ENCODE measurements at regions of chr16 and their contacts with region 1.

Region 1: DNA sequence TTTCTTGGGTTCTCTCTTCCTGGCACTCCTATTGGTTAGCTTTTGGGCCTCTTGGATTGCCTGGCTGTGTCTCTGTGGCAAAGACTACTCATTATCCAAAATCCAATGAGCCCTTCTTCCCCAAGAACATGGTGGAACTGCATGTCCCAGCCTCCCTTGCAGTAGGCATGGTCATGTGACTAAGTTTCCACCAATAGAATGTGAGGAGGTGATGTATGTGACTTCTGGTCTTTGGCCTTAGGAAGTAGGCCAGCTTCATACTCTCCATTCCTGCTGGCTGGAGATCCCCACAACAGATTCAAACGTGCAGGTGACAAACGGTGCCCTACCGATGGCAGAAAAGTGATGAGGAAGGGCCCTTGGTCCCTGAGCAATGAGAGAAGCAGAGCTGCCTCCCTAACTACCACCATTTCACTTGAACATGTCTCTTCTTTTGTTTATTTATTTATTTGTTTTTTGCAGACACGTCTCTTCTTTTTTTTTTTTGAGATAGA is 17.3 kb upstream of the SPN start:
- DNase-seq: peak in 1 of 9 experiments; percentile 42
- ATAC-seq: no peak
- H3K4me3 ChIP-seq: no peak overlapping the region
- H3K4me3 Mint-ChIP-seq: no peak overlapping the region
- H3K27ac ChIP-seq: no peak overlapping the region
- H3K27ac Mint-ChIP-seq: peak overlapping the region; percentile 67
- H3K4me1 ChIP-seq: peaks cover 17% of the 10 kb centered on the region
- H3K4me1 Mint-ChIP-seq: peaks cover 23% of the 10 kb centered on the region
- H3K27me3 ChIP-seq: no peaks in the 10 kb centered on the region
- H3K27me3 Mint-ChIP-seq: no peaks in the 10 kb centered on the region
- CTCF ChIP-seq: no peak

Region 2: GRCh38 chr16:27929818-27930217 is 1715.9 kb before region 1 on chr16:
- CTCF ChIA-PET with region 1: no interaction called
- POLR2A ChIA-PET with region 1: no interaction called
- intact Hi-C with region 1: no loop called
- DNase-seq: no peak
- ATAC-seq: no peak
- H3K4me3 ChIP-seq: no peak overlapping the region
- H3K4me3 Mint-ChIP-seq: no peak overlapping the region
- H3K27ac ChIP-seq: no peak overlapping the region
- H3K27ac Mint-ChIP-seq: no peak overlapping the region
- H3K4me1 ChIP-seq: no peaks in the 10 kb centered on the region
- H3K4me1 Mint-ChIP-seq: no peaks in the 10 kb centered on the region
- H3K27me3 ChIP-seq: no peaks in the 10 kb centered on the region
- H3K27me3 Mint-ChIP-seq: peaks cover 26% of the 10 kb centered on the region
- CTCF ChIP-seq: no peak

Region 3: DNA sequence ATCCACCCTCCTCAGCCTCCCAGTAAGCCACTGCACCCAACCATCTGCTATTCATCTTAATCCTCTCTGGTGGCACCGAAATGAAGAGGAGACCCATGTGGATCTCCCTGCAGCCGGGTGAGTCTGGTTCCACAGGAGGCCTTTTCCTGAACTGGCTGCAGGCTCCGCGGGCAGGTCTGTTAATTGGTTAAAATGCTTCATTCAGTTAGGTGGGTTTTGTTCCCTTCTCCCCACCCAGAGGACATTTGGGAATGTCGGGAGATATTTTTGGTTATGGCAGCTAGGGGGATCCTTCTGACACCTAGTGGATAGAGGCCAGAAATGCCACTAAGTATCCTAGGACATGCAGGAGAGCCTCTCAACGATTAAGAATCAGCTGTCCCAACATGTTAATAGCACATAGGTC is 83.4 kb after region 1 on chr16:
- CTCF ChIA-PET with region 1: no interaction called
- POLR2A ChIA-PET with region 1: no interaction called
- intact Hi-C with region 1: loop called in 1 of 2 experiments (anchors 10 kb)
- DNase-seq: peak in 1 of 9 experiments; percentile 39
- ATAC-seq: no peak
- H3K4me3 ChIP-seq: no peak overlapping the region
- H3K4me3 Mint-ChIP-seq: no peak overlapping the region
- H3K27ac ChIP-seq: no peak overlapping the region
- H3K27ac Mint-ChIP-seq: no peak overlapping the region
- H3K4me1 ChIP-seq: peaks cover 11% of the 10 kb centered on the region
- H3K4me1 Mint-ChIP-seq: peaks cover 23% of the 10 kb centered on the region
- H3K27me3 ChIP-seq: no peaks in the 10 kb centered on the region
- H3K27me3 Mint-ChIP-seq: no peaks in the 10 kb centered on the region
- CTCF ChIP-seq: peak; percentile 24

Region 4: DNA sequence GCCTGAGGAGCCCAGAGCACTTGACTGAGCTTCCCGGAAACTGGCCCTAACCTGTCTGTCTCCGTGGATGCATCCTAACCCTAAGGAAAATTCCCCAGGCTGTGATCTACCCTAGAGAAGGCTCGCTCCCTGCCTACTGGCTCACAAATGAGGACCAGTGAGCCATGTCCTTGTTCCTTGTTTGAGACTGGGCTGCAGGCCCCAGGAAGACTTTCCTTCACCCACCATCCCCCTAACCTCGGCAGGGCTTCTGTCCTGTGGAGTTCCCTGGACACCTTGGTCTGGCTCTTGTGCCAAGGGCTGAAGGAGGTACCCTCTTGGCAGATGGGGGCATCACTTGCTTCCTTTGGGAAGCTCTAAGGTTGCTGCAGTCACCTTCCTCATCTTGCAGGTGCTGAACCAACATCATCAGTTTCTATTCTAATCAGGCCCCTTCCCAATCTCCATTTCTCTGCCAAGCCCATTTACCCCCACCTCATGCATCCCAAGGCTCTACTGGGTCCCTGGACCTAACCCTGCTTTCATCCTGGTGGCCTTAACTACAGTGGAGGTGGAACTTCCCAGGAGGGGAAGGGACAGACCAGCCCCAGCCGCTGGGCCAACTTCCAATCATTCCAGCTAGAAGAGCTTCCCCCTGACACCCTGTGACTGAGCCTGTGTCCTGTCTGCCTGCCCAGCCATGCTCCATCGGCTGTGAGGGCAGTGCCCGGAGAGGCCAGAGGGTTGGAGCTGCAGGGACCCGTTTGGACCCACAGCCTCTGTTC is 1128.8 kb after region 1 on chr16:
- CTCF ChIA-PET with region 1: no interaction called
- POLR2A ChIA-PET with region 1: no interaction called
- intact Hi-C with region 1: no loop called
- DNase-seq: no peak
- ATAC-seq: no peak
- H3K4me3 ChIP-seq: peak overlapping the region; percentile 53 to 80
- H3K4me3 Mint-ChIP-seq: peak overlapping the region; percentile 90
- H3K27ac ChIP-seq: no peak overlapping the region
- H3K27ac Mint-ChIP-seq: no peak overlapping the region
- H3K4me1 ChIP-seq: peaks cover 14% of the 10 kb centered on the region
- H3K4me1 Mint-ChIP-seq: peaks cover 31% of the 10 kb centered on the region
- H3K27me3 ChIP-seq: no peaks in the 10 kb centered on the region
- H3K27me3 Mint-ChIP-seq: peaks cover 2% of the 10 kb centered on the region
- CTCF ChIP-seq: no peak

Measured in CD8-positive, alpha-beta T cell (primary cell).